Heart left ventricle (tissue), 16 donors: ENCODE measurements at regions of chr15 and their contacts with region 1.

Region 1: GRCh38 chr15:73991726-73992593 is at the start of gene STOML1:
- DNase-seq: peak; percentile 92 to 97 (median 96)
- ATAC-seq: peak; percentile 60 to 89 (median 82)
- H3K4me3 ChIP-seq: peak within 1 kb of the TSS; percentile 60 to 96 (median 87)
- H3K27ac ChIP-seq: peak within 1 kb of the TSS; percentile 90 to 100 (median 95)
- H3K4me1 ChIP-seq: peaks cover 24 to 86% (median 77%) of the 10 kb centered on the region in 12 donors
- H3K27me3 ChIP-seq: no peaks in the 10 kb centered on the region
- CTCF ChIP-seq: peak; percentile 82 to 99 (median 96)
- POLR2A ChIP-seq: peak in 1 of 2 donors; percentile 64
- total RNA-seq, gene STOML1: 25.0 to 41.1 (median 27.4) TPM

Region 2: DNA sequence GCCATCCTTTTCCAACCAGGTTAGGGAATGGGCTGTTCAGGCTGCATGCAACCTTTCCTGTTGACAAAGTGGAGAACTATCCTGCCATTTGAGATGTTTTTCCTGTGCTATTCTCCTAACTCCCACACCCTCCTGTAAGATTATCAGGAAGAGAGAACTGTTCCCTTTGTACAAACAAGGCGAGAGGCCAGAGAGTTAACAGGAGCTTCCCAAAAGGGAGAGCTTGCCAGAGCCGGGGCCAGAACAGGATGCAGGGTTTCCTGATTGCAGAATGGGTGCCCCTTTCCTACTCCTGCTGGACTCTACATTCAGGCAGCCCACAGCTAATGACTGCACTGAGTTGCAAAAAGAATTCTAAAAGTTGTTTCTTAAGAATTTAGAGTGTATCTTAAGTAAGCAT is 19.6 kb after region 1 on chr15:
- intact Hi-C with region 1: loop called in 2 of 10 experiments (anchors 2 kb)
- DNase-seq: peak in 4 of 5 donors; percentile 69 to 76 (median 75)
- ATAC-seq: peak; percentile 84 to 91 (median 90)
- H3K4me3 ChIP-seq: peak overlapping the region in 2 of 12 donors; percentile 6 to 9
- H3K27ac ChIP-seq: peak overlapping the region; percentile 31 to 83 (median 70)
- H3K4me1 ChIP-seq: peaks cover 21 to 80% (median 59%) of the 10 kb centered on the region in 12 donors
- H3K27me3 ChIP-seq: no peaks in the 10 kb centered on the region
- CTCF ChIP-seq: no peak
- POLR2A ChIP-seq: no peak

Region 3: DNA sequence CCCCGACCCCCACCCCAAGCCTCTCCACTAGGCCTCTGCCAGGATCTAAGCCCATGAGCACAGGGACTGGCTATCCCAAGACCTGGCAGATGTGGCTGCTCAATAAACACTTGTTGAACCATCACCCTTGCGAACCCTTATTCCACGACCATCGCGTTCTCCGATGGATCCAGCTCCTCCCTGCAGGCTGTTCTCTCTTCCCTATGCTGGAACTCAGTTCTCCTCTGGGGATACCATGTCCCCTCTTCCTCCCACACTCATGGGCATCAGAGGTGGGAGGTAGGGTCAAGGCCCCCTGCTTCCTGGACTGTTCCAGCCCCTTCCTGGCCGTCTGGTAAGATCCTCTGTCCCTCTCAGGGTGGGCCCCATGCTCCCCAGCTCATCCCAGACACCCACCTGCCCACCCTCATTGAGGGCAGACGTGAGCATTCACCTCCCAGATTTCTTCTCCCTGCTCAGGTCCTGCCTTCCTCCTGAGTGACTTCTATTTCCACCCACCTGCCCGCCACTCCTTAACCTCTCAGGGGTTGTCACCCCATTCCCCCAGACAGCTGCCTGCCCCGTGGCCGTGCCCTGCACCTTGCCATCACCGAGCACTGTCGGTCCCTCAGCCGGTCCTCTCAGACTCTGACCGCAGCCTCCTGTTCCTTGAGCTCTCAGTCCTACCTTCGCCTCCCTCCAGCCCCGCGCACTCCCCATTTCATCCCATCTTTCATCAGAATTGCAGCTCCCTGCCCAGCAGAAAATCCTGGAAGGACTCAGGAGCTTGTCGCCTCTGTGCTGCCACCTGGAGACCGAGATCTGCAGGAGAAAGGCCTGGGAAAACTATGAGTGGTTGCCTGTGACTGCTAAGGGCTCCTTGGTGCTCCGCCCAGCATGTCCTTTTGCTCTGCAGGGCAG is 44.6 kb after region 1 on chr15:
- intact Hi-C with region 1: loop called in 4 of 10 experiments (anchors 5 kb)
- DNase-seq: peak in 2 of 5 donors; percentile 61 to 71
- ATAC-seq: peak in 2 of 4 donors; percentile 23 to 54
- H3K4me3 ChIP-seq: no peak overlapping the region
- H3K27ac ChIP-seq: peak overlapping the region in 1 of 12 donors; percentile 19
- H3K4me1 ChIP-seq: peaks cover 3 to 58% (median 36%) of the 10 kb centered on the region in 12 donors
- H3K27me3 ChIP-seq: no peaks in the 10 kb centered on the region
- CTCF ChIP-seq: peak in 11 of 12 donors; percentile 30 to 68 (median 56)
- POLR2A ChIP-seq: no peak

Region 4: GRCh38 chr15:75081150-75081549 is 1089.2 kb after region 1 on chr15:
- intact Hi-C with region 1: no loop called
- DNase-seq: no peak
- ATAC-seq: no peak
- H3K4me3 ChIP-seq: no peak overlapping the region
- H3K27ac ChIP-seq: no peak overlapping the region
- H3K4me1 ChIP-seq: peaks cover 0 to 10% (median 0%) of the 10 kb centered on the region in 12 donors
- H3K27me3 ChIP-seq: no peaks in the 10 kb centered on the region
- CTCF ChIP-seq: no peak
- POLR2A ChIP-seq: no peak